Activated T-helper 1 cell treated with anti-CD3 and anti-CD28 coated beads, Interleukin-12 subunit alpha, Interleukin-12 subunit beta, Interleukin-2, Interleukin-4 antibody, amounts not matched to agents 30 ng/mL and 10 ng/mL and 1 ng/mL, durations not matched to agents 14 hours and 24 hours and 36 hours (primary cell): ENCODE measurements at regions of chr2 and their contacts with region 1.

Region 1: GRCh38 chr2:82527124-82527523 is 1932.0 kb downstream of the SUCLG1 start:
- DNase-seq: no peak
- H3K4me3 Mint-ChIP-seq: no peak overlapping the region
- H3K27ac Mint-ChIP-seq: no peak overlapping the region
- H3K4me1 Mint-ChIP-seq: no peaks in the 10 kb centered on the region
- H3K27me3 Mint-ChIP-seq: no peaks in the 10 kb centered on the region

Region 2: DNA sequence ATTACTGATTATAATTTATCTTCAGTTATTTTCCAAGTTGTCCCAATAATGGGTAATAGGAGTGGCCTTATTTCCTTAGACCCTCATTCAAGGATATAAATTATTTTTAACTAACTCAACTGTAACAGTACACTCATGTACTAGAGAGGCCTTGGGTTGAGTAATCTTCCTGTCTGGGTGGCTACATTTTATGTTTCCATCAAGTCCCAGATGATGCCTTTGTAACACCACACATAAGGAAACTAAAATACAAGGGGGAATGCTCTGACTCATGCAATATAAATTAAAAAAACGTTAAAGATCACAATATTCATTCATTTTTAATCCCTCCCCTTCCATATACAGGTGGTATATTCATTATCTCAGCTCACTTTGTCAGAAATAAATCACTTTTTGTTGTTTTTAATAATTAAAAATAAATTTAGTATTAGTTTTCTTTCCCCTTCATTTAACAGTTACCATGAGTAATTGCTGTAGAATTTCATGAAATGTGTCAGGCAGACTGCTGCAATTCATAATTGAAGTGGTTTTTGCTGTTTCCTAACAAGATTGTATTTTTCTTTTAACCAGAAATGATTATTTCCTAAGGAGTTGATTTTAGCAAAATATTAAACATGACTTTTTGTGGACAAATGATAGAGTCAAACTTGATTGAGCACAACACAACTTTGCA is 528.4 kb after region 1 on chr2:
- intact Hi-C with region 1: no loop called
- DNase-seq: no peak
- H3K4me3 Mint-ChIP-seq: no peak overlapping the region
- H3K27ac Mint-ChIP-seq: no peak overlapping the region
- H3K4me1 Mint-ChIP-seq: no peaks in the 10 kb centered on the region
- H3K27me3 Mint-ChIP-seq: no peaks in the 10 kb centered on the region

Region 3: GRCh38 chr2:83342860-83343329 is 815.8 kb after region 1 on chr2:
- intact Hi-C with region 1: loop called (anchors 5 kb)
- DNase-seq: no peak
- H3K4me3 Mint-ChIP-seq: no peak overlapping the region
- H3K27ac Mint-ChIP-seq: no peak overlapping the region
- H3K4me1 Mint-ChIP-seq: no peaks in the 10 kb centered on the region
- H3K27me3 Mint-ChIP-seq: no peaks in the 10 kb centered on the region